ENCODE measurements at regions of chr16 and their contacts with region 1.

Region 1: GRCh38 chr16:30429678-30430427 is at the start of gene DCTPP1:
- DNase-seq: peak; percentile 89 to 100 (median 95)
- ATAC-seq: peak; percentile 96
- H3K4me3 ChIP-seq: peak within 1 kb of the TSS; percentile 62 to 71
- H3K4me3 Mint-ChIP-seq: no peak within 1 kb of the TSS
- H3K27ac ChIP-seq: peak within 1 kb of the TSS; percentile 60 to 72
- H3K27ac Mint-ChIP-seq: no peak within 1 kb of the TSS
- H3K4me1 ChIP-seq: peaks cover 18% of the 10 kb centered on the region
- H3K4me1 Mint-ChIP-seq: peaks cover 19% of the 10 kb centered on the region
- H3K27me3 ChIP-seq: no peaks in the 10 kb centered on the region
- H3K27me3 Mint-ChIP-seq: no peaks in the 10 kb centered on the region
- CTCF ChIP-seq: peak; percentile 63
- total RNA-seq, gene DCTPP1: 4.0 to 5.5 TPM

Region 2: DNA sequence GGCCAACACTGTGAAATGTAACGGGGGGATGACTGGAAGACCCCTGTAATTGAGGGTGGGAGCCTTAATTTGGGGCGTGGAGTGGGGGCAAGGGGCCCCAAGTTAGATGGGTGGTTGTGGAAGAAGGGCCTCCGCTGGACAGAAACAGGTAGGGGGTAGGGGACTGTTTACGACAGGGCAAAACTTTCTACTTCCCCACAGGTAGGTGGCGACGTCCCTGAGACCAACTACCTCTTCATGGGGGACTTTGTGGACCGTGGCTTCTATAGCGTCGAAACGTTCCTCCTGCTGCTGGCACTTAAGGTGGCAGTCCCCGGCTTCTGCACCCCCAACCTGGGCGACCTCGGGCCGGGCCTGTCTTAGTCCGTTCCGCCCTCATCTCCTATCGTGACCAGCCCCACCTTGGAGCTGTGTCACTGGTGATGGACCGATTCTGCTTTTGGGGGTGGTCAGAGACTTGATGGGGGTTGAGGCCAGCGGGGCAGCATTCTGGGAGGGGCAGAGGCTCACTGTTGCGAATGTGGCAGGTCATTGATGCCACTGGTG is 347.2 kb before region 1 on chr16:
- CTCF ChIA-PET with region 1: no interaction called
- POLR2A ChIA-PET with region 1: no interaction called
- intact Hi-C with region 1: no loop called
- DNase-seq: no peak
- ATAC-seq: no peak
- H3K4me3 ChIP-seq: no peak overlapping the region
- H3K4me3 Mint-ChIP-seq: no peak overlapping the region
- H3K27ac ChIP-seq: no peak overlapping the region
- H3K27ac Mint-ChIP-seq: no peak overlapping the region
- H3K4me1 ChIP-seq: peaks cover 12% of the 10 kb centered on the region
- H3K4me1 Mint-ChIP-seq: peaks cover 15% of the 10 kb centered on the region
- H3K27me3 ChIP-seq: no peaks in the 10 kb centered on the region
- H3K27me3 Mint-ChIP-seq: no peaks in the 10 kb centered on the region
- CTCF ChIP-seq: no peak

Region 3: DNA sequence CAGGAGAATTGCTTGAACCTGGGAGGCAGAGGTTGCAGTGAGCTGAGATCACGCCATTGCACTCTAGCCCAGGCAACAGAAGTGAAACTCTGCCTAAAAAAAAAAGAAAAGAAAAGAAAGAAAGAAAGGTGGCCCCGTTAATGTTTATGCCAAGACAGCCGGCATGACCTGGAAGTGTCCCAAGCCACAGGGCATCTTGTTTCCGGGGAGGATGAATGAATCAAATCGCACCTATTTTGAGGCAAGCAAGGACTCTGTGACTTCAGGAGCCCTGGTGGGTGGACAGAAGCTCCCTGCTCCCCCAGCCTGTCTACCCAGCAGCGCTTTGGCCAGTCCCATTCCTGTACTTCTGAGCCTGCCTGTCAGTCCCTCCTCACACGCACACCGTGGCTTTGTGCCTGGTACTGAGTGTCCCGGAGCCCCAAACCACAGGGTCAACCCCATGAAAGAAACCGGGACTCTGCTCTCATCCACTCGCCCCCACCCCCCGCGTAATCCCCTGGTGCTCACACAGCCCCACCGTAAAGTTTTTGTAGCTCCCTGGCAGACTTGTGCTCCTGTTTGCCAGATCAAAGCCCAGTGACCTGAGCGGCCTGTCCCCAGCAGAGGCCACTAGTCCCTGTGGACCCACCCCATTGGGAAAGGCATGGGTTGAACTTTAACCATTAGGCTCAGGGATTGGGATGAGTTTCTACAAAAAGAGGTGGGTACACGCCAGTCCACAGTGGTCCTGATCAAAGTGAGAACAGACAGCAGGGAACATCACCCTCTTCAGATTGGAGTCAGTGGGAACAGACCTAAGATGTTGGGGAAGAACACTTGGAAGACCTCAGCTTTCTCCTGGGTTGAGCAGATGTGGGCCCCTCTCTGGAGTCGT is 94.0 kb before region 1 on chr16:
- CTCF ChIA-PET with region 1: no interaction called
- POLR2A ChIA-PET with region 1: no interaction called
- intact Hi-C with region 1: no loop called
- DNase-seq: peak in 4 of 9 experiments; percentile 32 to 72 (median 60)
- ATAC-seq: peak; percentile 2
- H3K4me3 ChIP-seq: peak overlapping the region; percentile 38 to 51
- H3K4me3 Mint-ChIP-seq: peak overlapping the region; percentile 86
- H3K27ac ChIP-seq: peak overlapping the region; percentile 50 to 52
- H3K27ac Mint-ChIP-seq: peak overlapping the region; percentile 86
- H3K4me1 ChIP-seq: peaks cover 10% of the 10 kb centered on the region
- H3K4me1 Mint-ChIP-seq: peaks cover 32% of the 10 kb centered on the region
- H3K27me3 ChIP-seq: no peaks in the 10 kb centered on the region
- H3K27me3 Mint-ChIP-seq: no peaks in the 10 kb centered on the region
- CTCF ChIP-seq: no peak

Region 4: DNA sequence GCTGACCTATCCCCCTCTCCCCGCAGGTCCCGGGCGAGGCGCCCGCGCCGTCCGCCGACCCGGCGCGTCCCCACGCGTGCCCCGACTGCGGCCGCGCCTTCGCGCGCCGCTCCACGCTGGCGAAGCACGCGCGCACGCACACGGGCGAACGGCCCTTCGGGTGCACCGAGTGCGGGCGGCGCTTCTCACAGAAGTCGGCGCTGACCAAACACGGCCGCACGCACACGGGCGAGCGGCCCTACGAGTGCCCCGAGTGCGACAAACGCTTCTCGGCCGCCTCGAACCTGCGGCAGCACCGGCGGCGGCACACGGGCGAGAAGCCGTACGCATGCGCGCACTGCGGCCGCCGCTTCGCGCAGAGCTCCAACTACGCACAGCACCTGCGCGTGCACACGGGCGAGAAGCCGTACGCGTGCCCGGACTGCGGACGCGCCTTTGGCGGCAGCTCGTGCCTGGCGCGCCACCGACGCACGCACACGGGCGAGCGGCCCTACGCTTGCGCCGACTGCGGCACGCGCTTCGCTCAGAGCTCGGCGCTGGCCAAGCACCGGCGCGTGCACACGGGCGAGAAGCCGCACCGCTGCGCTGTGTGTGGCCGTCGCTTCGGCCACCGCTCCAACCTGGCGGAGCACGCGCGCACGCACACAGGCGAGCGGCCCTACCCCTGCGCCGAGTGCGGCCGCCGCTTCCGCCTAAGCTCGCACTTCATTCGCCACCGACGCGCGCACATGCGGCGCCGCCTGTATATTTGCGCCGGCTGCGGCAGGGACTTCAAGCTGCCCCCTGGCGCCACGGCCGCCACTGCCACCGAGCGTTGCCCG is 12.1 kb before region 1 on chr16:
- CTCF ChIA-PET with region 1: interaction called, 23 read pairs
- POLR2A ChIA-PET with region 1: interaction called, 63 read pairs
- intact Hi-C with region 1: loop called in 1 of 2 experiments (anchors 1 kb)
- DNase-seq: peak; percentile 78 to 98 (median 88)
- ATAC-seq: peak; percentile 87
- H3K4me3 ChIP-seq: peak overlapping the region; percentile 52 to 72
- H3K4me3 Mint-ChIP-seq: peak overlapping the region; percentile 74
- H3K27ac ChIP-seq: peak overlapping the region; percentile 81 to 91
- H3K27ac Mint-ChIP-seq: peak overlapping the region; percentile 77
- H3K4me1 ChIP-seq: peaks cover 18% of the 10 kb centered on the region
- H3K4me1 Mint-ChIP-seq: peaks cover 7% of the 10 kb centered on the region
- H3K27me3 ChIP-seq: no peaks in the 10 kb centered on the region
- H3K27me3 Mint-ChIP-seq: no peaks in the 10 kb centered on the region
- CTCF ChIP-seq: no peak

Region 5: GRCh38 chr16:30526823-30527635 is 97.2 kb after region 1 on chr16:
- CTCF ChIA-PET with region 1: interaction called, 7 read pairs
- POLR2A ChIA-PET with region 1: interaction called, 4 read pairs
- intact Hi-C with region 1: loop called in 1 of 2 experiments (anchors 2 kb)
- DNase-seq: peak; percentile 53 to 92 (median 86)
- ATAC-seq: peak; percentile 75
- H3K4me3 ChIP-seq: peak overlapping the region; percentile 74 to 75
- H3K4me3 Mint-ChIP-seq: peak overlapping the region; percentile 87
- H3K27ac ChIP-seq: peak overlapping the region; percentile 59 to 69
- H3K27ac Mint-ChIP-seq: peak overlapping the region; percentile 90
- H3K4me1 ChIP-seq: peaks cover 12% of the 10 kb centered on the region
- H3K4me1 Mint-ChIP-seq: peaks cover 24% of the 10 kb centered on the region
- H3K27me3 ChIP-seq: no peaks in the 10 kb centered on the region
- H3K27me3 Mint-ChIP-seq: no peaks in the 10 kb centered on the region
- CTCF ChIP-seq: no peak

Region 6: DNA sequence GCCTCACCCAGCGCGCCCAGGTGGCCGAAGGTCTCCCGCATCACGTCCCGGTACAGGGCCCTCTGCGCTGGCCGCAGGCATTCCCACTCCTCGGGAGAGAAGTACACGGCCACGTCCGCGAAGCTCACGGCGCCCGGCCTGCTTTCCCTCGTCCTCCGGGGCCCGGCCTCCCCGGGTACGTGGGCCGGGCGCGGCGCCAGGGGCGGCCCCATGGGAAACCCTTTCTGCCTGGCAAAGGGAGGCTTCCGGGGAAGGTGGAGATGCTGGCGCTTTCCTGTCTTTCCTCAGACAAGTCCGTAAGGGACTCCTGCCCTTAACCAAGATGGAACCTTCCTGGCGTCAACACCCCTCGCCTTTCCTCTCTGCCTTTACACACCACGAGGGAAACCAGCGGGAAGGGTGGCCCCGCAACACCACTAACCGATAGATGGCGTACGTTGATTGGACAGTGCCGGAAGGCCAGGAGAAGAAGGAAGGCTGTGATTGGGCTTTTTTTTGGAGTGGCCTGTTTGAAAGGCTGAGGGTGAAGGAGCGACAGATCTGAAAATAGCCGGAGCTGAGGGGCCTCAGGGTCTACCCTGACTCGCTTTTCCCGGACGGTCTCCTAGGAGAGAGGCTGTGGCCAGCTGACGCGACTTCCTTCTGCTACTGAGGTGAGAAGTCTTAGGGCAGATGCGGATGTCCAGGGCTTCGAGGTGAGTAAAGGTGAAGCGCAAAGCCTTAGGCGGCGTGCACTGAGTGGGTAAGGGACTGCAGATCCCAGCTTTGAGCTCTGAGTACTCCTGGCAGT is 155.7 kb after region 1 on chr16 and contains the start of gene ZNF785:
- CTCF ChIA-PET with region 1: interaction called, 3 read pairs
- POLR2A ChIA-PET with region 1: no interaction called
- intact Hi-C with region 1: loop called in 1 of 2 experiments (anchors 1 kb)
- DNase-seq: peak; percentile 81 to 98 (median 91)
- ATAC-seq: peak; percentile 99
- H3K4me3 ChIP-seq: peak within 1 kb of the TSS; percentile 68 to 78
- H3K4me3 Mint-ChIP-seq: peak within 1 kb of the TSS; percentile 94
- H3K27ac ChIP-seq: peak within 1 kb of the TSS; percentile 44 to 61
- H3K27ac Mint-ChIP-seq: peak within 1 kb of the TSS; percentile 91
- H3K4me1 ChIP-seq: peaks cover 12% of the 10 kb centered on the region
- H3K4me1 Mint-ChIP-seq: peaks cover 27% of the 10 kb centered on the region
- H3K27me3 ChIP-seq: no peaks in the 10 kb centered on the region
- H3K27me3 Mint-ChIP-seq: no peaks in the 10 kb centered on the region
- CTCF ChIP-seq: no peak
- total RNA-seq, gene ZNF785: 5.0 to 6.9 TPM

Region 7: DNA sequence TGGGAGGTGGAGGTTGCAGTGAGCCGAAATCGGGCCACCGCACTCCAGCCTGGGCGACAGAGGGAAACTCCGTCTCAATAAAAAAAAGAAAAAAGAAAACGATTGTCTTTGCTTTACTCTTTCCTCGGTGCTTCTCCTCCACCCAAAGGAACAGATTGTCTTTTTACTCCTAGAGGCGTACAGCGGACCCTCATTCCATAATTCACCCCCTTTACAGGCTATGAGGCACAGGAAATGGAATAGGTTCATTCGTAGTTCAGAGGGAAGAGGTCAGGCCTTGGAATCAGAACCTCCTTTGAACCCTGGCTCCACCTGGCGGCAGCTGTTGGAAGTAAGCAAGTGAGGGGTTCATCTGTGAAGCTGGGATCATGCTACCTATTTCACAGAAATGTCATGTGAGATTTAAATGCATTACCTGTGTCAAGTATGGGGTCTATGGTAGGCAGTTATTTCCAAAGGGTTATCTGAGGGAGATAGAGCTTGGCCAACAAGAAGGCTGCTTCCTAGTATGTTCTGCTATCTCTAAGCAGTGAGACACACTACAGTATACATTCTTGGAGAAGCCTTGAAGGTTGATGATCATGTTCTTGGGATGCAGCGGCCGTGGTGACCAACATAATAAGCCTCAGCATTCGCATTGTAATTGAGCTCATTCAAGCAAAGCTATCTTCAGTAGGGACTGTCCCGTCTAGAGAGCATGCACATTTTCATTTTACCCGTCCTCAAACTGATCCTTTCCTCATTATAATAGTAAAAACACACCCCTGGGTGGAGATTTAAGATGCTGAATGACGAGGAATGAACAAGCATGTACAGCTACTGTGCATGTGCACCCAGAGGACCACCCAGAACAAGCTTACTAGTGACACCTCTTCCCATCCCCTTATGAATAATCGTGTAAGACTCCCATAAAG is 199.0 kb after region 1 on chr16:
- CTCF ChIA-PET with region 1: interaction called, 6 read pairs
- POLR2A ChIA-PET with region 1: interaction called, 4 read pairs
- intact Hi-C with region 1: loop called in 1 of 2 experiments (anchors 1 kb)
- DNase-seq: peak; percentile 77 to 92 (median 84)
- ATAC-seq: peak; percentile 96
- H3K4me3 ChIP-seq: peak overlapping the region in 1 of 2 experiments; percentile 10
- H3K4me3 Mint-ChIP-seq: peak overlapping the region; percentile 79
- H3K27ac ChIP-seq: peak overlapping the region in 1 of 2 experiments; percentile 19
- H3K27ac Mint-ChIP-seq: no peak overlapping the region
- H3K4me1 ChIP-seq: peaks cover 9% of the 10 kb centered on the region
- H3K4me1 Mint-ChIP-seq: peaks cover 5% of the 10 kb centered on the region
- H3K27me3 ChIP-seq: no peaks in the 10 kb centered on the region
- H3K27me3 Mint-ChIP-seq: no peaks in the 10 kb centered on the region
- CTCF ChIP-seq: peak; percentile 85